Mammary epithelial cell (primary cell): ENCODE measurements at regions of chr1 and their contacts with region 1.

Region 1: GRCh38 chr1:110338886-110339406 is at the start of gene RBM15:
- DNase-seq: peak; percentile 100
- H3K4me3 ChIP-seq: peak within 1 kb of the TSS; percentile 76 to 82 (median 79)
- H3K27ac ChIP-seq: peak within 1 kb of the TSS; percentile 87
- H3K4me1 ChIP-seq: peaks cover 33% of the 10 kb centered on the region
- H3K27me3 ChIP-seq: no peaks in the 10 kb centered on the region
- CTCF ChIP-seq: no peak
- total RNA-seq, gene RBM15: 26.3 to 47.0 TPM

Region 2: DNA sequence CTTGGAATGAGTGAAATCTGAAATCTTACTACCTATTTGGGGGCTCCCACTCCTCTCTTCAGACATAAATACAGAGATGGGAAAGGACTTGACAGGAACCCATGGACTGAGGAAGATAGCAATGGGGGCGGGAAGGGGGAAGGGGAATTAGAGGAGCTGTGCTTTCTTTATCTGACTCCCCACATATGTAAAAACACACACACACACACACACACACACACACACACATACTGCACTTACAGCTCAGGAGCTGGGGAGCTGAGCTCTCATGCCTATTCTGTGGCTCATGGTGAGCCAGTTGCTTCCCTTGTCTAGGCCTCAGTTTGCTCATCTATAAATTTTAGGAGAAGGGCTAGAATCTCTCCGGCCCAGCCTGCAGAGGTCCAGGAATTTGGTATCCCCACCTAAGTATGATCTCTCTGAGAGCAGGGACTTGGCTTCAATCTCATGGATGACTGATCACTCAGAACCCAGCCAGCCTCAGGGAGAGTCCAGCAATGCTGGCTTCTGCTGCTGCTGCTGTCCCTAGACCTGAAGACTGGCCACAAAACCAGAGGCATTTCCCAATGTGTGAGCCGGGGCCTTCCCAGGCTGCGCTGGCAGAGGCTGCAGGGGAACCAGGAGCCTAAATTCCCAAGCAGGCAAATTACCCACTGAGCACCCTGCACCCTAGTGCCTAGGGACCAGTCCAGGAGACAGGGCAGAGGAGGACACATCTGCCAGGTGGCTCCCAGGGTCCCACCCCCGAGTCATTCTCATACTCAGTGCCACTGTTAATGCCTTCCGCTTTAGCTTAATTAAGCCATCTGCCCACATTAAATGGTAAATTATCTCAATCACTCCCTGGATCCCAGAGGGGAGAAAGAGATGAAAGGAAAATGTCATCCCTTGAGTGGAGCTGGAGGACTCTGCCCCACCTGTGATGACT is 57.3 kb before region 1 on chr1:
- CTCF ChIA-PET with region 1: no interaction called
- dilution Hi-C with region 1: no loop called
- in situ Hi-C with region 1: no loop called
- intact Hi-C with region 1: no loop called
- DNase-seq: no peak
- H3K4me3 ChIP-seq: no peak overlapping the region
- H3K27ac ChIP-seq: no peak overlapping the region
- H3K4me1 ChIP-seq: no peaks in the 10 kb centered on the region
- H3K27me3 ChIP-seq: no peaks in the 10 kb centered on the region
- CTCF ChIP-seq: no peak

Region 3: GRCh38 chr1:110407260-110408210 is 68.6 kb after region 1 on chr1 and contains the start of gene LAMTOR5:
- CTCF ChIA-PET with region 1: interaction called, 4 read pairs
- dilution Hi-C with region 1: no loop called
- in situ Hi-C with region 1: no loop called
- intact Hi-C with region 1: loop called (anchors 1 kb)
- DNase-seq: peak; percentile 89
- H3K4me3 ChIP-seq: peak within 1 kb of the TSS; percentile 93 to 99 (median 98)
- H3K27ac ChIP-seq: peak within 1 kb of the TSS; percentile 88
- H3K4me1 ChIP-seq: peaks cover 3% of the 10 kb centered on the region
- H3K27me3 ChIP-seq: no peaks in the 10 kb centered on the region
- CTCF ChIP-seq: peak in 1 of 2 donors; percentile 20
- total RNA-seq, gene LAMTOR5: 75.5 to 106 TPM

Region 4: DNA sequence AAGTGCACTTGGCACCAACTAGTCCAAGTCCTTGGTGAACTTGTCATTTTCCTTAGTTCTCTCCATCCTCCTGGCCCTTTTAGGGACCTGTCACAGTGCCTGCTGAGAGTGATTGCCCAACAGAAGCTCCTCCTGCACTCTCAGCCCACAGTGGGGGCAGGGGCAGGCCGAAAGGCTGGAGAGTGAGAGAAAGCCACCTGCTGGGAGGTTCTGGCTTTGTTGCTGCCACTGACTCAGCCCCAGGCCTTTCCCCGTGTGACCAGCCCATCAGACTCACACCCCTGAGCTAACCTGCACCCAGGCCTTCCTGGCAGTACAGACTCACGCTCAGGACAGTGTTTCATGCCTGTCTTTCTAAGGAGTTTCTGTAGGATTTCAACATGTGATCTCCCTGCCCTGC is 94.9 kb after region 1 on chr1:
- CTCF ChIA-PET with region 1: no interaction called
- dilution Hi-C with region 1: no loop called
- in situ Hi-C with region 1: no loop called
- intact Hi-C with region 1: no loop called
- DNase-seq: peak; percentile 74
- H3K4me3 ChIP-seq: no peak overlapping the region
- H3K27ac ChIP-seq: no peak overlapping the region
- H3K4me1 ChIP-seq: no peaks in the 10 kb centered on the region
- H3K27me3 ChIP-seq: peaks cover 9% of the 10 kb centered on the region
- CTCF ChIP-seq: peak in 1 of 2 donors; percentile 58

Region 5: GRCh38 chr1:110477041-110477440 is 138.1 kb after region 1 on chr1:
- CTCF ChIA-PET with region 1: no interaction called
- dilution Hi-C with region 1: no loop called
- in situ Hi-C with region 1: no loop called
- intact Hi-C with region 1: loop called (anchors 5 kb)
- DNase-seq: peak; percentile 87
- H3K4me3 ChIP-seq: no peak overlapping the region
- H3K27ac ChIP-seq: peak overlapping the region; percentile 8
- H3K4me1 ChIP-seq: peaks cover 35% of the 10 kb centered on the region
- H3K27me3 ChIP-seq: no peaks in the 10 kb centered on the region
- CTCF ChIP-seq: no peak